Heart right ventricle (tissue), 16 donors: ENCODE measurements at regions of chr3 and their contacts with region 1.

Region 1: DNA sequence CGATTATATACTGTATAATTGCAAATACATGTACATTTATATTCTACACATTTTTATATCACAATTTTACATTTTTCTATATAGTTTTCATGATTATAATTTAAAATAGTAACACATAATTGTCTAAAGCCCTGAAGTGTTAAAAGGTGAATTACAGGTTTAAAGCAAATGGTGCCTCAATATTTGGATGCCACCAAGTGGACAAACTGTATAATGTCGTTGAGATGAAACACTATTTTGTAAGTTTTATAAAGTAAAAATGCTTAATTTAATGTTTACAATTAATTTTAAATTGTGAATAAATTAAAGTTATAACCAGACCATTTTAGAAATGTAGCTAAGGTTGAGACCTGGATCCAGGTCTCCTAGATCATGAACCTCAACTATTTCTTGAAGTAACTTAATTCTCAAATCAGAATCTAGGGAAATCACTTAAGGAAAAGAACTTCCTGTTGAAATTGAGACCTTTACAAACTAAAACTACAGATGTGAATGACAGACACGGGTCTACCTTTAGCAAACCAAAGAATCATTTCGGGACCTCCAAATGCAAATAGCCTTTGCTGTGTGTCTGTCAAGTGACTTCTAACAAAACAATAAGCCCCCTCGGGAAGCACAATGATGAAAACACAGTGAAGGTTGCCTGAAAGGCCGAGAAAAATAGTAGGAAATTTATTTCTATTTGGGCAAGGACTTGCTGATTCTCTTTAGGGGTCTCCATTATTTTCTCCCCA is 37.8 kb downstream of the EHHADH start:
- DNase-seq: no peak
- ATAC-seq: peak in 1 of 8 donors; percentile 63
- H3K4me3 ChIP-seq: peak overlapping the region in 8 of 10 donors; percentile 10 to 50 (median 40)
- H3K27ac ChIP-seq: peak overlapping the region in 8 of 10 donors; percentile 15 to 81 (median 60)
- H3K4me1 ChIP-seq: peaks cover 0 to 15% (median 6%) of the 10 kb centered on the region in 9 donors
- H3K27me3 ChIP-seq: no peaks in the 10 kb centered on the region
- CTCF ChIP-seq: peak; percentile 20 to 67 (median 54)

Region 2: GRCh38 chr3:184874709-184875644 is 341.1 kb before region 1 on chr3:
- intact Hi-C with region 1: loop called in 1 of 10 experiments (anchors 10 kb)
- DNase-seq: peak in 1 of 2 donors; percentile 10
- ATAC-seq: peak in 2 of 8 donors; percentile 29 to 48
- H3K4me3 ChIP-seq: no peak overlapping the region
- H3K27ac ChIP-seq: no peak overlapping the region
- H3K4me1 ChIP-seq: no peaks in the 10 kb centered on the region
- H3K27me3 ChIP-seq: no peaks in the 10 kb centered on the region
- CTCF ChIP-seq: peak; percentile 33 to 76 (median 60)

Region 3: DNA sequence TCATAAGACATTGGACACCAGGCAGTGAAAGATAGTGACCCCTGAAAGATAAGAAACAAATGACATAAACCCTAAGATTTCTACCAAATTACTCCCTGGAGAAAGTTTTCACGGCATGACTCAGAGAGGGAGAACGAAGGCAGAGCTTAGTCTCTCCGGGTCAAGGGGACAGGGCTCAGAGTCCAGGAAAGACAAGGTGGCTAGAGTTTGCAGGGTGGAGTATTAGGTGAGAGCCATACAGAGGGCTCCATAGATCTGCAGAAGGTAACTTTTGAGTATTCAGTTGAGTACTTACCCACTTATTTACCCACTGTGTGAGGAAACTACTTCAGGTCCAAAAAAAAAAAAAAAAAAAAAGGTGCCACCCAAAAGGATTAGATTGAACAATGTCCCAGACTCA is 206.4 kb before region 1 on chr3:
- intact Hi-C with region 1: no loop called
- DNase-seq: no peak
- ATAC-seq: no peak
- H3K4me3 ChIP-seq: no peak overlapping the region
- H3K27ac ChIP-seq: no peak overlapping the region
- H3K4me1 ChIP-seq: no peaks in the 10 kb centered on the region
- H3K27me3 ChIP-seq: no peaks in the 10 kb centered on the region
- CTCF ChIP-seq: no peak

Region 4: GRCh38 chr3:185152410-185153210 is 63.4 kb before region 1 on chr3 and contains the start of gene C3orf70:
- intact Hi-C with region 1: loop called in 1 of 10 experiments (anchors 10 kb)
- DNase-seq: peak; percentile 67 to 76
- ATAC-seq: peak; percentile 43 to 87 (median 80)
- H3K4me3 ChIP-seq: peak within 1 kb of the TSS; percentile 51 to 76 (median 64)
- H3K27ac ChIP-seq: peak within 1 kb of the TSS; percentile 64 to 92 (median 82)
- H3K4me1 ChIP-seq: peaks cover 0 to 27% (median 11%) of the 10 kb centered on the region in 9 donors
- H3K27me3 ChIP-seq: peaks cover 0 to 79% (median 31%) of the 10 kb centered on the region in 7 donors
- CTCF ChIP-seq: peak in 2 of 9 donors; percentile 5 to 22
- total RNA-seq, gene C3orf70: 1.4 to 2.2 (median 1.7) TPM

Region 5: GRCh38 chr3:185318141-185318540 is 102.1 kb after region 1 on chr3:
- intact Hi-C with region 1: no loop called
- DNase-seq: no peak
- ATAC-seq: no peak
- H3K4me3 ChIP-seq: no peak overlapping the region
- H3K27ac ChIP-seq: peak overlapping the region in 2 of 10 donors; percentile 56 to 78
- H3K4me1 ChIP-seq: peaks cover 0 to 32% (median 9%) of the 10 kb centered on the region in 9 donors
- H3K27me3 ChIP-seq: no peaks in the 10 kb centered on the region
- CTCF ChIP-seq: no peak